Endothelial cell of umbilical vein (primary cell): ENCODE measurements at regions of chrX and their contacts with region 1.

Region 1: GRCh38 chrX:49191033-49191871 is 5.1 kb upstream of the PRICKLE3 start:
- DNase-seq: peak; percentile 99
- H3K4me3 ChIP-seq: peak overlapping the region; percentile 55 to 84 (median 83)
- H3K27ac ChIP-seq: no peak overlapping the region
- H3K4me1 ChIP-seq: peaks cover 2% of the 10 kb centered on the region
- H3K27me3 ChIP-seq: no peaks in the 10 kb centered on the region
- CTCF ChIP-seq: no peak
- POLR2A ChIP-seq: peak; percentile 79

Region 2: GRCh38 chrX:49120099-49120498 is 71.2 kb before region 1 on chrX:
- CTCF ChIA-PET with region 1: interaction called, 4 read pairs
- POLR2A ChIA-PET with region 1: no interaction called
- dilution Hi-C with region 1: no loop called
- intact Hi-C with region 1: loop called (anchors 1 kb)
- DNase-seq: no peak
- H3K4me3 ChIP-seq: no peak overlapping the region
- H3K27ac ChIP-seq: no peak overlapping the region
- H3K4me1 ChIP-seq: peaks cover 5% of the 10 kb centered on the region
- H3K27me3 ChIP-seq: no peaks in the 10 kb centered on the region
- CTCF ChIP-seq: no peak
- POLR2A ChIP-seq: no peak

Region 3: DNA sequence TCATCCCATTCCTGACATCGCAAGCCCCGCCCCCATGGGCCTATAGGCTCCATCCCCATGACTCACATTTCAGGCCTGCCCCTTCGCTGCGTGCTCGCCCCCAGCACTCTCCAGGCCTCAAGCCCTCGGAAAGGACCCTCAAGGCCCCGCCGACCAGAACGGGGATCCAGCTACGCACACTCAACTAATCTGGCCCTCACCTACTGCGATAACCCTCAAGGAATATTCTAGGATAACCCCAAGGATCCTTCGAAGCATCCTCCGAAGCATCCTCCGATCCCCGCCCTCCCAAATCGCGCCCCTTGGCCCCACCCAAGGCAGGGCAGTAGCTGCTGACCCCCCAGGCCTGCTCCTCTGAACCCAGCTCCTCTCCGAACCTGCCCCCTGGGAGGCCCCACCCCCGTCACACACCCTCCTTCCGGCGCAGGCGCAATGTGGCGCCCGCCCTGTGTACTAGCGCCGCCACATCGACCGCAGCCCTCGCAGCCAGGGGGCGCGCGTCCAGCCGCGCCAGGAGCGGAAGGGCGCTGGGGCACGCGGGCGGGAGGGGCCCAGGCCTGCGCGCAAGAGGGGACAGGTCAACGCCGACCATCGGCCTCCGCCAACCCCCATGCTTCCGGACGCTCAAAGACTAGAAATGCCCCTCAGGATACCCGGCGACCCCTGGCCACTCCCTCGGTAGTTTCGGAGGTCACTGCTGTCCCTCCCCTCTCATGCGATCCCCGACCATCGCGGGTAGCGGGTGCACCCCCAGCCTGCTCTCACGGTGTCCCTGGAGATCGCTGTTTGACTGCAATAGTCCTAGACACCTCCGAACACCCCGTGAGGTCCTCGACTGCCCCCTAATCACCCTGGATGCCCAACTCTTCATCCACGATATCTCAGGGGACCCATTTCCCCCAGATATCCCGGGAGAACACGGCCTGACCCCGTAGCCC is 35.1 kb before region 1 on chrX:
- CTCF ChIA-PET with region 1: interaction called, 10 read pairs
- POLR2A ChIA-PET with region 1: no interaction called
- dilution Hi-C with region 1: no loop called
- intact Hi-C with region 1: no loop called
- DNase-seq: peak; percentile 81
- H3K4me3 ChIP-seq: peak overlapping the region; percentile 14 to 59 (median 48)
- H3K27ac ChIP-seq: peak overlapping the region; percentile 96
- H3K4me1 ChIP-seq: peaks cover 2% of the 10 kb centered on the region
- H3K27me3 ChIP-seq: no peaks in the 10 kb centered on the region
- CTCF ChIP-seq: peak; percentile 53 to 75
- POLR2A ChIP-seq: no peak

Region 4: GRCh38 chrX:49163555-49164419 is 27.5 kb before region 1 on chrX:
- CTCF ChIA-PET with region 1: no interaction called
- POLR2A ChIA-PET with region 1: interaction called, 7 read pairs
- dilution Hi-C with region 1: no loop called
- intact Hi-C with region 1: loop called (anchors 1 kb)
- DNase-seq: peak; percentile 80
- H3K4me3 ChIP-seq: peak overlapping the region in 1 of 3 experiments; percentile 38
- H3K27ac ChIP-seq: peak overlapping the region; percentile 79
- H3K4me1 ChIP-seq: peaks cover 21% of the 10 kb centered on the region
- H3K27me3 ChIP-seq: no peaks in the 10 kb centered on the region
- CTCF ChIP-seq: peak; percentile 63 to 69
- POLR2A ChIP-seq: no peak

Region 5: GRCh38 chrX:49214996-49215526 is 23.8 kb after region 1 on chrX:
- CTCF ChIA-PET with region 1: no interaction called
- POLR2A ChIA-PET with region 1: no interaction called
- dilution Hi-C with region 1: no loop called
- intact Hi-C with region 1: no loop called
- DNase-seq: no peak
- H3K4me3 ChIP-seq: no peak overlapping the region
- H3K27ac ChIP-seq: no peak overlapping the region
- H3K4me1 ChIP-seq: no peaks in the 10 kb centered on the region
- H3K27me3 ChIP-seq: no peaks in the 10 kb centered on the region
- CTCF ChIP-seq: no peak
- POLR2A ChIP-seq: no peak

Region 6: DNA sequence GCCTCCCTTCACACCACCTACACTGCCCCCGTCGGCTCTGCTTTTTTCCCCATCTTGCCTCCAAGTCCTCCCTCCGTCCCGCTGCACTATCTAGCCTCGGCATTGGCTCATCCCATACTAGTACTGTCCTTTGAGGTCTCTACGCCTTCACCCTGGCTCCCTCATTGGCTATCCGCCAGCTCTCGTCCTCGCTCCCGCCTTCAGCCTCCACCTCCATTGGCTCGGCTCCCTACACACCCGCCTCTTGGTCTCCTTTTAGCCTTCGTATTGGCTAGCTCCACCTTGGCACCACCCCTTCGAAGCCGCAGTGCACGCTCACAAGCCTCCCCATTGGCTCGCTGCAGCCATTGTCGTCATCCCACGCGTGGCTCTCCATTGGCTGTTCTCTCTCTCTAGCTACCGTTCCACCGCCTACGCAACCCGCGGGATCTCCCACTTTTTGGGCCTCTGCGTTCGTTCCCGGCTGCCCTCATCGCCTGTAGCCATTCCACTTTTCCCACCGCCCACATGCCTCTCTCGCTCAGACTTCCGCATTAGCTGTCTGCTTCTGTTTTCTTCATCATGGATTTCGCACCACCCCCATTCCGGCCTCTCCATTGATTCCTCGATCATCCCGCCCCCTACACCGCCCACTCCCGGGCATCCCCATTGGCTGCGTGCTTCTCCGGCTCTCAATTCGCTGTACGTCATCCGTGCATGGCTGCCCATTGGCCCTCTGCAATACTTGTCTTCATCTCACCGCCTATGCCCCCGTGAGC is 77.9 kb after region 1 on chrX:
- CTCF ChIA-PET with region 1: interaction called, 12 read pairs
- POLR2A ChIA-PET with region 1: interaction called, 6 read pairs
- dilution Hi-C with region 1: no loop called
- intact Hi-C with region 1: loop called (anchors 1 kb)
- DNase-seq: peak; percentile 97
- H3K4me3 ChIP-seq: peak overlapping the region; percentile 23 to 78 (median 59)
- H3K27ac ChIP-seq: peak overlapping the region; percentile 80
- H3K4me1 ChIP-seq: no peaks in the 10 kb centered on the region
- H3K27me3 ChIP-seq: no peaks in the 10 kb centered on the region
- CTCF ChIP-seq: no peak
- POLR2A ChIP-seq: peak; percentile 67

Region 7: DNA sequence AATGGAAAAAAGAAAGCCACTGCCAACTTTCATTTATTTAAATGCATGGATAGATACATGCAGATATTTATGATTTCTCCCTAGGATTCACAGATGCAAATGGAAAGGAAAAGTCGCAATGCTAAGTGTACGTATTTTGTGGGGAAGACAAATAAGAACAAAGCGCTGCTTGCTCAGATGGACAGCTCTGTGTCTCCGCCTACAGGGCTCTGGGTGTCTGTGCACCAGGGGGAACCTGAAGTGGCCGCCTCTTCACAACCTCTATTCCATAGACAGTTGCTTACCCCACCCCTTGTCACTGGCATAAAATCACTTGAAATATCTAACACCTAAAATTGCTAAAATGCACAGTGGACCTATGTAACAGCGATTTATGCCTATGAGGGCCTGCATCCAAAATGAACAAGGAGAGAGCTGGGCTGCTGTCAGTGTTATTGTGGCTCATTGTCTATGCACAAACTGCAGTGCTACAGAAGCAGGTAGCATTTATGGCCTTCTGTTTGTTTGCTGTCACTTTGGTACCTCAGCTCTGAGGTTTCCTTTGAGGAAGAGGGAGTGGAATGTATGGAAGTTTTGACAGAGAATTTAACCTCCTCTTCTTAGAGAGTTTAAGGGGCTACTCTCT is 563.1 kb after region 1 on chrX:
- CTCF ChIA-PET with region 1: interaction called, 10 read pairs
- POLR2A ChIA-PET with region 1: no interaction called
- dilution Hi-C with region 1: no loop called
- intact Hi-C with region 1: loop called (anchors 1 kb)
- DNase-seq: peak; percentile 32
- H3K4me3 ChIP-seq: no peak overlapping the region
- H3K27ac ChIP-seq: no peak overlapping the region
- H3K4me1 ChIP-seq: no peaks in the 10 kb centered on the region
- H3K27me3 ChIP-seq: peaks cover 0 to 3% of the 10 kb centered on the region in 2 experiments
- CTCF ChIP-seq: peak; percentile 59 to 71
- POLR2A ChIP-seq: no peak

Region 8: DNA sequence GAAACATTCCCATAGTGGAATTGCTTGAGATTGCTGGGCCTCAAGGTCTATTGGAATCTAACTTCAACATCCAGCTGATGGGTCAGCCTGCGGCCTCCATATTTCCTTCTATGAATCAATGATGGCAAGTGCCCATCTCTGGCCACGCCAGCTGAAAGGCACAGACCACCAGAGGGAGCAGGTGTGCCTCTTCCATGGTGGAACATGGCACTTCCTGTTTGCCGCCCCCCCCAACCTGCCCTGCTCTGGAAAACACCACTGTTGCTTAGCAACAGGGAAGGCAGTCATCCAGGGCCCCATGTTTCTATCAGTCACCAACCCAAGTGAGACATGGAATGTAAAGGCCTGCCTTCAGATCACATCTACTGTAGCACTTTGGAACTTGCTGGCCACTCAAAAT is 649.4 kb after region 1 on chrX:
- CTCF ChIA-PET with region 1: interaction called, 12 read pairs
- POLR2A ChIA-PET with region 1: no interaction called
- dilution Hi-C with region 1: no loop called
- intact Hi-C with region 1: no loop called
- DNase-seq: peak; percentile 46
- H3K4me3 ChIP-seq: no peak overlapping the region
- H3K27ac ChIP-seq: no peak overlapping the region
- H3K4me1 ChIP-seq: no peaks in the 10 kb centered on the region
- H3K27me3 ChIP-seq: no peaks in the 10 kb centered on the region
- CTCF ChIP-seq: peak; percentile 21 to 34
- POLR2A ChIP-seq: no peak